ENCODE measurements at regions of chr16 and their contacts with region 1.

Region 1: DNA sequence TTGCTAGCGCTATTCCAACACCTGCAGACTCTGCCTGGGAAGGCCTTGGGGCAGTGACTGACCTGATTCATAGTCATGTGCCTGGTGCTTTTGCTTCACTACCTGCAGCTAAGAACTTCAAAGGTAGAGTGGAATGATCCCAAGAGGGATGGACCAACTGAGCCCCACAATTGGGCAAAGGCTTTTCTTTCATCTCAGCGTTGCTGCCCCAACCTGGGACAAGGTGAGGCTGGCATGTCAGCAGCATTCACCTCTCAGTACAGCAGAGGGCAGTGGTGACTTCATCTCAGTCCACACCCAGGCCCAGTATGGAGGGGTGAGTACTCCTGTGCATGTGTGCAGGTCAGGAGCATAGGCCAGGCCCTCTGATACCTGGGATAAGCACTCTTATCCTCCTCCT is 149.6 kb upstream of the GNAO1 start:
- DNase-seq: peak; percentile 35
- ATAC-seq: no peak
- H3K4me3 ChIP-seq: no peak overlapping the region
- H3K4me3 Mint-ChIP-seq: no peak overlapping the region
- H3K27ac ChIP-seq: no peak overlapping the region
- H3K27ac Mint-ChIP-seq: no peak overlapping the region
- H3K4me1 ChIP-seq: no peaks in the 10 kb centered on the region
- H3K4me1 Mint-ChIP-seq: no peaks in the 10 kb centered on the region
- H3K27me3 ChIP-seq: peaks cover 0 to 3% (median 2%) of the 10 kb centered on the region in 4 experiments
- H3K27me3 Mint-ChIP-seq: peaks cover 20% of the 10 kb centered on the region
- CTCF ChIP-seq: peak; percentile 17

Region 2: DNA sequence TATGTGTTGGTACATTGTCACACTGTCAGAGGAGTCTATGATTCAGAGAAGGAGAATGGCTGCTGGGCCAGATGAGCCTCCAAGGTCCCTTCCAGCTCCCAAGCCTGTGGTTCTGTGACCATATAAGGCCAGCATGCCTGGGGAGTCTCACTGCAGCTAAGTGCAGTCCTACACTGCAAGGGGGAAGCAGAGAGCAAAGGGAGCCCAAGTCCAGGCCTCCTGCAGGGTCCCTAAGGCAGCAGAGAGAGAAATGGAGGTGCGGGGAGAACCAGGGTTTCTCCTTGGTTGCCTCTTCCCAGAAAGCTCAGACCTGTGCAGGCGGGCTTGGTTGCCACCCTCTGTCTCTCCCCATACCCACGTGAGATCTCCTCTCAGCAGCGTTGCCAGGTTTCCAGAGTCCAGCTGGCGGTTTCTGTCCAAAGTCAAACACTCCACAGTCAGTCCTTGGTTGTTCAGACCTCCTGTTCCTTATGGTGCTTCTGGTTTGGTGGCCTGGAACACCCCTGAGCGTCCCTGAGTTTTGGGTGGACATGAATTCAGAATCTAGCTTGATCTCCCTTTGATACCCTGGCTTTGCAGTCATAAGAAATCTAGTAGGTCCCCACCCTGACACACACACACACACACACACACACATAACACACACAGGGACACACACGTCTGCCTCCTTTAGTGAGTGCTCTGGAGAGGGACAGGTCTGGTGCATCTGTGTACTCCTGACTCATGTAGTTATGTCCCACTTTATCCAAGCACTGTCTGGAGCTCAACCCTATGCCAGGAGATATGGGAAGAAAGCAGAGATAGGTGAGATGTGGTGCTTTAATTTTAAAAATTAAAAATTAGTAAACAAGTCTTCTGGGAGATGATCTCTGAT is 228.4 kb after region 1 on chr16:
- CTCF ChIA-PET with region 1: no interaction called
- POLR2A ChIA-PET with region 1: no interaction called
- intact Hi-C with region 1: no loop called
- DNase-seq: no peak
- ATAC-seq: no peak
- H3K4me3 ChIP-seq: no peak overlapping the region
- H3K4me3 Mint-ChIP-seq: no peak overlapping the region
- H3K27ac ChIP-seq: no peak overlapping the region
- H3K27ac Mint-ChIP-seq: no peak overlapping the region
- H3K4me1 ChIP-seq: no peaks in the 10 kb centered on the region
- H3K4me1 Mint-ChIP-seq: no peaks in the 10 kb centered on the region
- H3K27me3 ChIP-seq: peaks cover 0 to 5% (median 2%) of the 10 kb centered on the region in 4 experiments
- H3K27me3 Mint-ChIP-seq: peaks cover 32% of the 10 kb centered on the region
- CTCF ChIP-seq: no peak

Region 3: GRCh38 chr16:56708525-56709442 is 667.1 kb after region 1 on chr16:
- CTCF ChIA-PET with region 1: no interaction called
- POLR2A ChIA-PET with region 1: no interaction called
- intact Hi-C with region 1: loop called (anchors 10 kb)
- DNase-seq: no peak
- ATAC-seq: no peak
- H3K4me3 ChIP-seq: no peak overlapping the region
- H3K4me3 Mint-ChIP-seq: no peak overlapping the region
- H3K27ac ChIP-seq: no peak overlapping the region
- H3K27ac Mint-ChIP-seq: no peak overlapping the region
- H3K4me1 ChIP-seq: no peaks in the 10 kb centered on the region
- H3K4me1 Mint-ChIP-seq: no peaks in the 10 kb centered on the region
- H3K27me3 ChIP-seq: peaks cover 0 to 8% (median 0%) of the 10 kb centered on the region in 4 experiments
- H3K27me3 Mint-ChIP-seq: peaks cover 3% of the 10 kb centered on the region
- CTCF ChIP-seq: no peak

Measured in B cell (primary cell).